Tibial artery (tissue), 4 donors: ENCODE measurements at regions of chr3 and their contacts with region 1.

Region 1: GRCh38 chr3:11568503-11569155 is 75.1 kb downstream of the VGLL4 start:
- DNase-seq: peak; percentile 89 to 95
- H3K4me3 ChIP-seq: peak overlapping the region; percentile 27 to 34
- H3K27ac ChIP-seq: peak overlapping the region; percentile 87 to 95
- H3K4me1 ChIP-seq: peaks cover 5 to 64% (median 58%) of the 10 kb centered on the region in 4 donors
- H3K27me3 ChIP-seq: no peaks in the 10 kb centered on the region
- CTCF ChIP-seq: no peak

Region 2: GRCh38 chr3:10983219-10983916 is 585.3 kb before region 1 on chr3:
- intact Hi-C with region 1: no loop called
- DNase-seq: no peak
- H3K4me3 ChIP-seq: no peak overlapping the region
- H3K27ac ChIP-seq: no peak overlapping the region
- H3K4me1 ChIP-seq: peaks cover 0 to 17% (median 12%) of the 10 kb centered on the region in 4 donors
- H3K27me3 ChIP-seq: no peaks in the 10 kb centered on the region
- CTCF ChIP-seq: peak; percentile 57 to 63

Region 3: GRCh38 chr3:11477407-11477911 is 91.2 kb before region 1 on chr3:
- intact Hi-C with region 1: loop called (anchors 10 kb)
- DNase-seq: no peak
- H3K4me3 ChIP-seq: no peak overlapping the region
- H3K27ac ChIP-seq: peak overlapping the region; percentile 71 to 79
- H3K4me1 ChIP-seq: peaks cover 0 to 59% (median 43%) of the 10 kb centered on the region in 4 donors
- H3K27me3 ChIP-seq: no peaks in the 10 kb centered on the region
- CTCF ChIP-seq: no peak

Region 4: DNA sequence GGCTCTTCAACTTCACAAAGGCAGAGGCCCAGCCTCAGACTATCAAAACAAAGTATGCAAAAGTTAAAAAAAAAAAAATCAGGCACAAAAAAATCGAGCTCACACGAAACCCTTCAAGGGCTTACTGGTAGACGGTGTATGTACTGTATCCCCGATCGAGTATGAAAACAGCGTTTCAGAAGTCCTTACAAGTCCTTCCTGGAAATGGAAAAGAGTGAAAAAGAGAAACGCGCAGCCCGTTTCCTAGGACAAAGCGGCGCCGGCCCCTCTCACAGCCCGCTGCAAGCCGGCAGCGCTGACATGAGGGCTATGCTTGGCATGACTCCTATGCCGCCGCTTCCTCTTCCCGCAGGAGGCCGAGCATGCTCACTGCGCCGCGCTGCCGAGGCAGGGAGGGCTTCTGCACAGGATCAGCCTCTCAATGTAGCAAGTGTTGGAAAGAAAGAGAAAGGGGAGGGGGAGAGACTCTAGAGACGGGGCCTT is 75.0 kb after region 1 on chr3 and contains the start of gene VGLL4:
- intact Hi-C with region 1: loop called (anchors 10 kb)
- DNase-seq: peak; percentile 89 to 93
- H3K4me3 ChIP-seq: peak within 1 kb of the TSS; percentile 60 to 82
- H3K27ac ChIP-seq: peak within 1 kb of the TSS; percentile 88 to 95
- H3K4me1 ChIP-seq: peaks cover under 1 to 41% (median 28%) of the 10 kb centered on the region in 4 donors
- H3K27me3 ChIP-seq: no peaks in the 10 kb centered on the region
- CTCF ChIP-seq: no peak

Region 5: GRCh38 chr3:11803977-11804892 is 235.6 kb after region 1 on chr3:
- intact Hi-C with region 1: loop called (anchors 10 kb)
- DNase-seq: peak in 1 of 2 donors; percentile 24
- H3K4me3 ChIP-seq: no peak overlapping the region
- H3K27ac ChIP-seq: no peak overlapping the region
- H3K4me1 ChIP-seq: no peaks in the 10 kb centered on the region
- H3K27me3 ChIP-seq: no peaks in the 10 kb centered on the region
- CTCF ChIP-seq: peak; percentile 70 to 80